Testis (tissue), 5 donors: ENCODE measurements at regions of chr15 and their contacts with region 1.

Region 1: GRCh38 chr15:66851226-66852071 is 149.4 kb downstream of the SMAD6 start:
- DNase-seq: peak; percentile 93
- H3K4me3 ChIP-seq: no peak overlapping the region
- H3K27ac ChIP-seq: peak overlapping the region in 1 of 2 donors; percentile 12
- H3K4me1 ChIP-seq: peaks cover 18% of the 10 kb centered on the region
- H3K27me3 ChIP-seq: no peaks in the 10 kb centered on the region
- CTCF ChIP-seq: peak; percentile 95 to 96 (median 96)
- POLR2A ChIP-seq: no peak

Region 2: GRCh38 chr15:66603301-66604179 is 247.9 kb before region 1 on chr15:
- intact Hi-C with region 1: loop called (anchors 10 kb)
- DNase-seq: peak; percentile 74
- H3K4me3 ChIP-seq: no peak overlapping the region
- H3K27ac ChIP-seq: no peak overlapping the region
- H3K4me1 ChIP-seq: no peaks in the 10 kb centered on the region
- H3K27me3 ChIP-seq: no peaks in the 10 kb centered on the region
- CTCF ChIP-seq: peak; percentile 58 to 77 (median 59)
- POLR2A ChIP-seq: no peak

Region 3: DNA sequence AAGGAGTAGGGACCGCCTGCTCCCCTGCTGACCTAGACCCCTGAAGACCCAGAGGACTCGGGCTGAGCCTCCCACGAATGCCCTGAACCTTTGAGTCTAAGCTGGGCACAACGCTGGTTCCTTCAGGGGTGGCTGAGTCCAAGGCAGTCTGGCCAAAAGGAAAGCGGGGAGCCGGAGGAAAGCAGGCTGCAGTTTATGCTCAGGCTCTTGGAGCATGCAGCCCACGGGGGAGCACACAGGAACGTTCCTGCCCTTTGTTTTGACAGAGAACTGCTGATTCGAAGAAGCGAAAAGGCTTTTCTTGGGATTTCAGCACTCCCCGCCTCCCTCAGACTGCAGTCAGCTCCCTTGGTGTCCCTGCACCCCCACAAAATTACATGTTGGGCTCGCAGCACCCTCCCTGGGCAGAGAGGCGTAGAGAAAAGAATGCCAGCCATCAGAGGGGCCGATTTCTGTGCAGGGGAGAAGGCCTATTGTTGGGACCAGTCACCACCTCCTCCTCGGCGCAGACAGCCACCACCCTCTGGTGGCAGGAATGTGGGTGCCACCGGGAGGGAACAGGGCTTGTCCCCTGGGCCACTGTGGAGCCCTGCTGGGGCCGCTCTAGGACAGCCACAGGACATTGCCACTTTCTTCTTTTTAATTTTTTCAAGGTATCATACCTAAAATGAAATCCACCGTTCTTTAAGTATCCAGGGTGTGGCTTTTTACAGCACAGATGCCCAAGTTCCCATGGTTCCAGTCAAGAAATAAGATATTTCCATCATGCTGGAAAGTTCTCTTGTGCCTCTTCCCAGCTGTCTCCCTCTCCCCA is 77.2 kb before region 1 on chr15:
- intact Hi-C with region 1: no loop called
- DNase-seq: peak; percentile 86
- H3K4me3 ChIP-seq: no peak overlapping the region
- H3K27ac ChIP-seq: peak overlapping the region; percentile 17 to 39
- H3K4me1 ChIP-seq: peaks cover 32% of the 10 kb centered on the region
- H3K27me3 ChIP-seq: no peaks in the 10 kb centered on the region
- CTCF ChIP-seq: peak; percentile 95 to 98 (median 97)
- POLR2A ChIP-seq: no peak

Region 4: GRCh38 chr15:66789029-66790025 is 62.1 kb before region 1 on chr15:
- intact Hi-C with region 1: loop called (anchors 10 kb)
- DNase-seq: peak; percentile 58
- H3K4me3 ChIP-seq: no peak overlapping the region
- H3K27ac ChIP-seq: peak overlapping the region in 1 of 2 donors; percentile 61
- H3K4me1 ChIP-seq: peaks cover 5% of the 10 kb centered on the region
- H3K27me3 ChIP-seq: no peaks in the 10 kb centered on the region
- CTCF ChIP-seq: peak in 2 of 3 experiments; percentile 26 to 27
- POLR2A ChIP-seq: no peak